Activated T-helper 1 cell treated with anti-CD3 and anti-CD28 coated beads, Interleukin-12 subunit alpha, Interleukin-12 subunit beta, Interleukin-2, Interleukin-4 antibody, amounts not matched to agents 30 ng/mL and 10 ng/mL and 1 ng/mL, durations not matched to agents 14 hours and 24 hours and 36 hours (primary cell): ENCODE measurements at regions of chr17 and their contacts with region 1.

Region 1: GRCh38 chr17:5486204-5487124 is at the start of gene MIS12:
- DNase-seq: peak; percentile 95
- H3K4me3 Mint-ChIP-seq: peak within 1 kb of the TSS; percentile 98
- H3K27ac Mint-ChIP-seq: peak within 1 kb of the TSS; percentile 96
- H3K4me1 Mint-ChIP-seq: peaks cover 49% of the 10 kb centered on the region
- H3K27me3 Mint-ChIP-seq: no peaks in the 10 kb centered on the region
- total RNA-seq, gene MIS12: 38.1 and 39.6 TPM in 2 replicates

Region 2: DNA sequence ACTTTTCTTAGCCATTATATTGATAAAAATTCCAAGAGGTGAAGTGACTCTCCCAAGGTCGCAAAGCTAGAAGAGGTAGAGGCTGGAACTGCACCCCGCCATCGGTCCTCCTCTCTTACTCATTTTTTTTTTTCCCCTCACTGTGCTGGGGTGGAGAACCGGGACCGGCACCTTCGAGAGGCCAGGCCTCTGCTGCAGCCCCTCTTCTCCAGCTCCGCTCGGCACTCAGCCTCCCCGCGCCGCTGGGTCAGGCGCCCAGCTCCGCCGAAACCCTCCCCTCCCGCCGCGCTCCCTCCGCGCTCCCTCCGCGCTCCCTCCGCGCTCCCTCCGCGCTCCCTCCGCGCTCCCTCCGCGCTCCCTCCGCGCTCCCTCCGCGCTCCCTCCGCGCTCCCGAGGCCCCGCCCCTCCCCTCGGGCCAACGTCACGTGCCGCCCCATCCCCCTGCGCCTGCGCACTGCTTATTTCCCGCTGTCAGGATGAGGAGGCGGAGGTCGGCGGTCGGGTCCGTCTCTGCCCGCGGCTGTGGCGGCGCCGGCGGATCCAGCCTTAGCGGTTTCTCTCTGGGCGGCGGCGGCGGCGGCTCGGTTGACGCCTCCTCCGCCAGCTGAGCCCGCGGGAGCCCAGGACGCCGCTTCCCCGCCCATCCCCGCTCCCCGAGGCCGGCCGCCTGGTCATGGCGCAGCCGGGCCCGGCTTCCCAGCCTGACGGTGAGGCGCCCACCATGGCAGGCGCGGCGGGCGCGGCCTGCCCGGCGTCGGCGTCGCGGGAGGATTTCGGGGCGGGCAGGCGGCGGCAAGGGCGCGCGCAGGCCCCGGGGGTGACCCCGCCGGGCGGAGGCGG is 204.4 kb before region 1 on chr17 and contains the start of gene RABEP1:
- intact Hi-C with region 1: loop called (anchors 5 kb)
- DNase-seq: peak; percentile 92
- H3K4me3 Mint-ChIP-seq: peak within 1 kb of the TSS; percentile 90
- H3K27ac Mint-ChIP-seq: peak within 1 kb of the TSS; percentile 91
- H3K4me1 Mint-ChIP-seq: peaks cover 28% of the 10 kb centered on the region
- H3K27me3 Mint-ChIP-seq: peaks cover 3% of the 10 kb centered on the region
- total RNA-seq, gene RABEP1: 50.2 and 51.4 TPM in 2 replicates

Region 3: GRCh38 chr17:5438716-5439445 is 47.6 kb before region 1 on chr17 and contains the start of gene C1QBP:
- intact Hi-C with region 1: loop called (anchors 1 kb)
- DNase-seq: peak; percentile 89
- H3K4me3 Mint-ChIP-seq: peak within 1 kb of the TSS; percentile 94
- H3K27ac Mint-ChIP-seq: peak within 1 kb of the TSS; percentile 87
- H3K4me1 Mint-ChIP-seq: peaks cover 40% of the 10 kb centered on the region
- H3K27me3 Mint-ChIP-seq: no peaks in the 10 kb centered on the region
- total RNA-seq, gene C1QBP: 410 and 413 TPM in 2 replicates

Region 4: DNA sequence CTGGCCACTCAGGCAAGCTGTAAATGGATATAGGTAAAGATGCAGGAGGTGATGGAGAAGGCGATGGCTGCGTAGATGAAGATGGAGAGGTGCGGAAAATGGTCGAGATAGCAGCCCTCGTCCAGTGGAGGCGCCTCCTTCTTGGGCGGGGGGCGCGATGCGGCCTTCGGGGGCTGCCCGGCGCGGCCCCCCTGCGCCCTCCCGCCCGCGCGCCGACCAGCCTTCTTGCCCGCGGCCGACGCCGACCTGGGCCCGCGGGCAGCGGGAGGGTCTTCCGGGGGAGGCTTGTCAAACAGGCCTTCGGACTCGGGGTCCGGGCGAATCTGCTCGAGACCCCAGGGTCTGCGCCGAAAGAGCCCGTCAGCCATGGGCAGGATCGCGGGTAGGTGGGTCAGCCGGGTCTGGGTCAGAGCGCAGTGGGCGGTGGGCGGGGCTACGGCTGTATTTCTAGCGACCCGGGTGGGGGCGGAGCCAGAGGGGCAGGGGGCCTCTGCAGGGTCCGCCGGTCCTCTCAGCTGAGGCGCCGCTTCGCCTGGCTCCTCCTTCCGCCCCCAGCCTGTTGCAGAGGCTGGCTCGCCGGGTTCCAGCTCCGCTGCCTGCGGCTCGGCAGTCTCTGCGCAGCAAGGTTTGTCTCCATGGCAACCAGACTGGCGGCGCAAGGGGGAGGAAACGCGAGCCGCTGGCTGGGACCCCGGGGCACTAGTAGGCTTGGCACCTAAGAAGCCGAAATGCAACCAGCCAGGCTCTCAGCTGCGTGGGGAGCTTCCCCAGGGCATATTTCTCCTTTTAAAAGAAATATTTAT is 14.3 kb after region 1 on chr17:
- intact Hi-C with region 1: loop called (anchors 1 kb)
- DNase-seq: peak; percentile 63
- H3K4me3 Mint-ChIP-seq: peak overlapping the region; percentile 94
- H3K27ac Mint-ChIP-seq: peak overlapping the region; percentile 59
- H3K4me1 Mint-ChIP-seq: peaks cover 11% of the 10 kb centered on the region
- H3K27me3 Mint-ChIP-seq: peaks cover 3% of the 10 kb centered on the region

Region 5: GRCh38 chr17:6443692-6444569 is 957.5 kb after region 1 on chr17 and contains the start of gene PIMREG:
- intact Hi-C with region 1: loop called (anchors 1 kb)
- DNase-seq: peak; percentile 91
- H3K4me3 Mint-ChIP-seq: peak within 1 kb of the TSS; percentile 95
- H3K27ac Mint-ChIP-seq: peak within 1 kb of the TSS; percentile 97
- H3K4me1 Mint-ChIP-seq: peaks cover 14% of the 10 kb centered on the region
- H3K27me3 Mint-ChIP-seq: peaks cover 32% of the 10 kb centered on the region
- total RNA-seq, gene PIMREG: 6.8 and 8.0 TPM in 2 replicates

Region 6: DNA sequence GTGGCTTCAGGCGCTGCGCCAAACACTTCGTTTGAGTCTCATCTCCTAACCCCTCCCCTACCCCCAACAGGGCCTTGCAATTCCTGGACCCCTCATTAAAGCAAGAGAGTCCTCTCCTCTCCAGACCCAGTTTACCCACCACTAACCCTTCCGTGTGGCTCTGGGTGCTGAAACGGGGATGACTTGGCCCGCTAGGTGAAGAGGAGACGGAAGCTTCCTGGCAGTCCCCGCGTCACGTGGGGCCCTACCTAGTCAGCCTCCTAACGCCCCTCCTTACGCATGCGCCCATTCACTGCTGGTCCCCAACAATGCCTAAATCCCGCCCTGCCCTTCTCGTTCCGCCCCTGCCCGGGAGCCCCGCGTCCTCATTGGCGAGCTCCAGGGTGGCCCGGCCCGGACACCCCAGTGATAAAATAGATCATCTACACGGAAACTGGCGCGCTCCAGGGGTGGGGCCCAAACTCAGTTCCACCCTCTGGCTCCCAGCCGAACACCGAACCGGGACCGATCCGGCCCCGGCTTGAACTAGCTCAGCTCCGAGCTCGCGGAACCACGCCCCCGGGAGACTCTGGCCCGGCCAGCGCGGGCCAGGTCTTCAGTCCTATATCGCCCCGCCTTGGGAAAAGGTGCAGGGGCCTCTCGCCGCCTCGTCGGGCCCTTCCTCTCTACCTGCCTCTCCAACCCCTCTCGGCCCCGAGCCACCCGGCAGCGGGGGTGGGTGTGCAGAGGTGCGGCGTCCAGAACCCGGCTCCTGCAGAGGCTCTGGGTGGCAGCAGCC is 1549.3 kb after region 1 on chr17 and contains the start of gene SLC16A13:
- intact Hi-C with region 1: loop called (anchors 1 kb)
- DNase-seq: peak; percentile 99
- H3K4me3 Mint-ChIP-seq: peak within 1 kb of the TSS; percentile 95
- H3K27ac Mint-ChIP-seq: peak within 1 kb of the TSS; percentile 93
- H3K4me1 Mint-ChIP-seq: peaks cover 62% of the 10 kb centered on the region
- H3K27me3 Mint-ChIP-seq: no peaks in the 10 kb centered on the region
- total RNA-seq, gene SLC16A13: 14.3 and 14.8 TPM in 2 replicates